GM12878 (cell line): ENCODE measurements at regions of chr2 and their contacts with region 1.

Region 1: DNA sequence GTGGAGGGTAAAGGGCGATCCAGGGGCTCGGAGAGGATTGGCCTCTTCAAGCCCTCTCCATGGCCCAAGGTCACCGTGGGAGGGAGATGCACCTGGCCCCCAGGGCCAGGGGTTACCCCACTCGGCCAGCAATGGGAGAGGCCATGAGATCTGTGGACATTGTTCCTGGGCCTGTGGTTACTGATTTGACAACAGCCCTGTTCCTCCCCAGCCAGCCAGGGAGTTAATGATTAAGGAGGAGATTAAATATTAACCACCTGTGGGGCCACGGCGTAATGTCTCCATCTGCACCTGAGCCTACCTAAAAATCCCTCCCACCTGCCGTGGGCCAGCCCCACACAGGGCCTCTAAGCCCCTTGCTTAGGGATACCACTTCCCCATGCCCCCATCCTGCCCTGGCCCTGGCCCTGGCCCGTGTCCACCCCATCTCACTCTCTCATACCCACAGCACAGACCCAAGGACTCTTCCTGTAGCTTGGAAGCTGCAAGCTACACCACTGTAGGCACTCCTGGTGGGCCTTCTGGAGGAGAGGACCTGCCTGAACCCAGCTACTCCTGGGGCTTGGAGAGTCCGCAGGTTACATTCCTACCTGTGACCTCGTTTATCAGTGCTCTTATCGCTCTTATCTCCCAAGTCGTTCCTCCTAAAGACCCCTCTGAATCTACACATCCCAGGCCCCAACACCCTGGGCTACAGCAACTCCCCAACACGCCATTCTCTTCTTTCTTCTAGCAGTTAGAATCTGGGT is 32.1 kb downstream of the ZFP36L2 start:
- DNase-seq: peak; percentile 53
- ATAC-seq: peak; percentile 72
- H3K4me3 ChIP-seq: no peak overlapping the region
- H3K27ac ChIP-seq: no peak overlapping the region; the same call in 1 of the 2 replicates
- H3K4me1 ChIP-seq: peaks cover 17% of the 10 kb centered on the region
- H3K27me3 ChIP-seq: no peaks in the 10 kb centered on the region
- CTCF ChIP-seq: no peak
- EP300 ChIP-seq: peak; percentile 22 to 47; a peak in 2 of 4 replicates
- POLR2A ChIP-seq: no peak
- RAD21 ChIP-seq: no peak

Region 2: DNA sequence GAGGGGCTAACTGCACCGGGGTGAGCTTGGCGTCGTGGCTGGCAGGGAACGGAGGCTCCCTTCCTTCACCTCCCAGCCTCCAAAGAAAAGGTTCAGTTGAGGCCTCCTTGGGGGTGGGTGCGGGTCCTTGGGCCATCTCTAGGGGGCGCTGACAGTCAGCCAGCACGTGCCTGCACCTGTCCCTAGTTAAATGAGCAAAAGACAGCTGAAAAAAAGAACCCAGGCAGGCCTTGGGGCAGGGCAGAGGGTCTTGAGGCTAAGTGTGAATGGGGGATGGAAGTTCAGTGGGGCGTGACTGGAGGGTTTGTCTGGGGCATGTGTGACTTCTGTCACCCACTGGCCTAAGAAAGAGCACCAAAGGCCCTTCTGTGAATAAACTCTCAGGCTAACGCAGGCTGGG is 24.3 kb before region 1 on chr2:
- CTCF ChIA-PET with region 1: interaction called, 20 read pairs
- POLR2A ChIA-PET with region 1: interaction called, 23 read pairs
- RAD21 ChIA-PET with region 1: interaction called, 41 read pairs
- SMC1A ChIA-PET with region 1: interaction called, 51 read pairs
- in situ Hi-C with region 1: no loop called
- intact Hi-C with region 1: no loop called
- DNase-seq: no peak
- ATAC-seq: peak; percentile 47
- H3K4me3 ChIP-seq: no peak overlapping the region
- H3K27ac ChIP-seq: no peak overlapping the region
- H3K4me1 ChIP-seq: peaks cover 35% of the 10 kb centered on the region
- H3K27me3 ChIP-seq: no peaks in the 10 kb centered on the region; a peak in 1 of 4 replicates
- CTCF ChIP-seq: peak; percentile 64 to 82 (median 81)
- EP300 ChIP-seq: no peak
- POLR2A ChIP-seq: no peak
- RAD21 ChIP-seq: peak; percentile 62

Region 3: DNA sequence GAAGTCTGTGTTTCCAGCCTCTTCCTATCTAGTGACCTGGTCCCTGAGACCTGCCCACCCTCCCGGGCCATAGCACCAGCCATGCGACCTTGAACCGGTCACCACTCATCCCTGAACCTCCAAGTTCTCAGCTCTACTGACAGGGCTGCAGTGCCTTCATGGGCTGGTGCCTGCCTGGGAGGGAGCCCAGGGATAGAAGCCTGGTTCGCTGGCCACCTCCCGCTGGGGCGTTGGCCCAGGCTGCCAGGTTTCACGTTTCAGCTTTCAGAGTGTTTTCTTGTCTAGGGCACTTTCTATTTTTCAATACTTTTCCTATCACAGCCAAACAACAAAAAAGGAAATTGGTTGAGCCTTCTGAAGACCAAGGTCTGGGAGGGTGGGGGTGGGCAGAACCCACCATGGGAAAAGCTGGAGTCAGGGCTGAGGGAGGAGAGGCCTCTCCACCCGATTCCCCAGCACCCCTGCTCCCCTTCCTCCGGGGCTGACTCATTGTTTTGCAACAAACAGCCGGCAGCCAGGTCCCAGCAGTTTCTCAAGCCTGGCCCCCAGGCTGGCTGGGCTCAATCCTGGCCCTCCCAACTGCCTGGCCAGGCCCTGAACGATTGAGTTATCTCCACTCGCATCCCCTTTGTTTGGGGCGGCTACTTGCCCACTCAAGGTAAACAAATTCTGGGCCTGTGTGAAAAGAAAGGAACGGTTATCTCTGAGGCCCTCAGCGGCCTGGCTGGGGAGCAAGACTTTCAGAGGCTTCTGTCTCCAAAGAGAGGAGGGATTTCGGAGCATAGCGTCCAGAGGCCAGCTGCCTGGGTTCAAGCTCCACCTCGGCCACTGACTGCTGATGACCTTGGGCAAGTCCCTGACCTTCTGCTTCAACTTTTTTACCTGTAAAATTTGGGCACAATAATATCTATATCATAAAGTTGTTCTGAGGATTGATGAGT is 15.4 kb before region 1 on chr2:
- CTCF ChIA-PET with region 1: interaction called, 20 read pairs
- POLR2A ChIA-PET with region 1: interaction called, 23 read pairs
- RAD21 ChIA-PET with region 1: interaction called, 41 read pairs
- SMC1A ChIA-PET with region 1: interaction called, 51 read pairs
- in situ Hi-C with region 1: no loop called
- intact Hi-C with region 1: no loop called
- DNase-seq: no peak
- ATAC-seq: no peak
- H3K4me3 ChIP-seq: no peak overlapping the region
- H3K27ac ChIP-seq: no peak overlapping the region
- H3K4me1 ChIP-seq: peaks cover 13% of the 10 kb centered on the region
- H3K27me3 ChIP-seq: no peaks in the 10 kb centered on the region
- CTCF ChIP-seq: no peak
- EP300 ChIP-seq: no peak
- POLR2A ChIP-seq: no peak
- RAD21 ChIP-seq: no peak

Region 4: GRCh38 chr2:43324259-43325106 is 130.2 kb after region 1 on chr2:
- CTCF ChIA-PET with region 1: no interaction called
- POLR2A ChIA-PET with region 1: no interaction called
- RAD21 ChIA-PET with region 1: no interaction called
- SMC1A ChIA-PET with region 1: no interaction called
- in situ Hi-C with region 1: no loop called
- intact Hi-C with region 1: no loop called
- DNase-seq: no peak
- ATAC-seq: no peak
- H3K4me3 ChIP-seq: no peak overlapping the region
- H3K27ac ChIP-seq: no peak overlapping the region
- H3K4me1 ChIP-seq: no peaks in the 10 kb centered on the region
- H3K27me3 ChIP-seq: no peaks in the 10 kb centered on the region
- CTCF ChIP-seq: no peak
- EP300 ChIP-seq: no peak
- POLR2A ChIP-seq: no peak
- RAD21 ChIP-seq: no peak

Region 5: GRCh38 chr2:43370705-43371104 is 176.4 kb after region 1 on chr2:
- CTCF ChIA-PET with region 1: no interaction called
- POLR2A ChIA-PET with region 1: no interaction called
- RAD21 ChIA-PET with region 1: no interaction called
- SMC1A ChIA-PET with region 1: no interaction called
- in situ Hi-C with region 1: no loop called
- intact Hi-C with region 1: no loop called
- DNase-seq: no peak
- ATAC-seq: no peak
- H3K4me3 ChIP-seq: no peak overlapping the region
- H3K27ac ChIP-seq: no peak overlapping the region
- H3K4me1 ChIP-seq: peaks cover 6% of the 10 kb centered on the region
- H3K27me3 ChIP-seq: no peaks in the 10 kb centered on the region
- CTCF ChIP-seq: no peak
- EP300 ChIP-seq: no peak
- POLR2A ChIP-seq: no peak
- RAD21 ChIP-seq: no peak